ENCODE measurements at regions of chr19 and their contacts with region 1.

Region 1: DNA sequence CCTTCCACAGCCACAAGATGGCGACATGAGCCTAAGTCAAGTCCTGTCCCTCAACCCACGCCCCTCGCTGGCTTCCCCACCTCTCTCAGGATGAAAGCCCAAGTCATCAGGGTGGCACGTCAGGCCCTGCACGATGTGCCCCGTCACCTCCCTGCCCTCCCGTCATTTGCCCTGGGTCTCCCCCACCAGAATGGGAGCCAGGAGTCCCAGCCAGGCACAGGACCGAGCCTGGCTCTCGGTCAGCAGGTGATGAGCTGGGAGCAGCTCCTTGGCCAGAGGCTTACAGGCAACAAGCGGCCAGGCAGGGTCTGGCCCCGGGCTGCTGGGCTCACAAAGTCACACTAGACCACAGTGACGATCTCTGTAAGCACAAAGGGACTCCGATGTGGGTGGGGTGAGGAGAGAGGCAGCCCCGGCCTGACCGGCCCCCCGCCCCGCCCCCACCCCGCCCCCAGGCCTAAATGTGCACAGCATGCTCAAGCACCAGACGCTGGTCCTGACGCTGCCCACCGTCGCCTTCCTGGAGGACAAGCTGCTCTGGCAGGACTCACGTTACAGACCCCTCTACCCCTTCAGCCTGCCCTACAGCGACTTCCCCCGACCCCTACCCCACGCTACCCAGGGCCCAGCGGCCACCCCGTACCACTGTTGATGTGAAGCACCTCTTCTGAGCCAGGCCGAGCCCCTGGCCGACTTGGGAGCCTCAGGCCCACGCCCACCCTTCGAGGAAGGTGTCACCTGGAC is 7.3 kb downstream of the MRPL4 start:
- DNase-seq: peak; percentile 89 to 96 (median 91)
- ATAC-seq: peak; percentile 59 to 63
- H3K4me3 ChIP-seq: no peak overlapping the region
- H3K27ac ChIP-seq: no peak overlapping the region
- H3K4me1 ChIP-seq: no peaks in the 10 kb centered on the region
- H3K27me3 ChIP-seq: no peaks in the 10 kb centered on the region

Region 2: GRCh38 chr19:10388957-10389356 is 129.6 kb after region 1 on chr19:
- intact Hi-C with region 1: loop called in 2 of 4 experiments (anchors 2 to 5 kb)
- DNase-seq: peak; percentile 85 to 96 (median 92)
- ATAC-seq: peak; percentile 62 to 68
- H3K4me3 ChIP-seq: no peak overlapping the region
- H3K27ac ChIP-seq: no peak overlapping the region
- H3K4me1 ChIP-seq: no peaks in the 10 kb centered on the region
- H3K27me3 ChIP-seq: no peaks in the 10 kb centered on the region